ENCODE measurements at regions of chr1 and their contacts with region 1.

Region 1: GRCh38 chr1:235888119-235888643 is 21.5 kb upstream of the LYST start:
- DNase-seq: peak; percentile 78
- H3K4me3 Mint-ChIP-seq: peak overlapping the region; percentile 20
- H3K27ac Mint-ChIP-seq: peak overlapping the region; percentile 80
- H3K4me1 Mint-ChIP-seq: peaks cover 46% of the 10 kb centered on the region
- H3K27me3 Mint-ChIP-seq: no peaks in the 10 kb centered on the region

Region 2: DNA sequence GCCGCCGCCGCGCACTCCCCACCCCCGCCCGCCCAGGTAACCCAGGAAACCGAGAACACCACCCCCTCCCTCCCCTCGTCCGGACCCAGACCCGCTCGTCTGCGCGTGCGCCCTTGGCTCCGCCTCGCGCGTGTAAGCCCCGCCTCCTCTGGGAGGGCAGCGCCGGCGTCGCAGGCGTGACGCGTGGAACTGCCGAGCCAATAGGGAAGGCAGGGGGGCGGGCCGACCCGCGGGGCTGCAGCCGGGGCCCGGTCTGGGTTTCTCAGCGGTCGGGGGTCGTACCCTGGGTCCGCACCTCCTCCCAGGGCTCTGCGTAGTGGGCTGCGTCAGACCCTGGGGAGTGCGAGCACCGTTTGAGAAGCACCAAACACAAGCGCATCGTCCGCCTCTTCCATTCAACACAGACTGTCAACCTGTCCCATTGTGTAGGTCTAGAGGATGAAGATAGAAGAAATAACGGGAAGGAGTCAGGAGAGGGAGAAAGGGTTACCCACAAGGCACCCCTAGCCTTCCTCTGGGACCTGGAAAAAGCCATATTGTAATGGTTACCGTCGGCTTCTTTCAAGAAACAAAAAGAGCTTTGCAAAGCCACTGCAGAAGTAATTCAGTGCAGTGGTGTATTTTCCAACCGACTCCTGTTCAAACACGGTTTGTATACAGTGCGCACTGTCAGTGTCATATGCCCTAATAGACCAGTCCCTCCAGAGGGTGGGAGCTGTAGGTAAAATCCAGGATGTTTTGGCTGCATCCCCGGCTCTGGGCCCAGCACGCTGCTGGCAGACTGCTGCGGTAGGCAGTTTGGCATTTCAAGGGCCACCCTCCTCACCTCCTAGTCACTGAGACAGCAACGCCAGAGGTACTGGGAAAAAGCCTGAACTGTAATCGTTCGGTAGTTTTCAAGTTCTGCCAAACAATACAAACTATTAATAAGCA is 21.0 kb before region 1 on chr1:
- CTCF ChIA-PET with region 1: interaction called, 16 read pairs
- POLR2A ChIA-PET with region 1: interaction called, 14 read pairs
- intact Hi-C with region 1: loop called (anchors 1 kb)
- DNase-seq: peak; percentile 98
- H3K4me3 Mint-ChIP-seq: peak overlapping the region; percentile 89
- H3K27ac Mint-ChIP-seq: peak overlapping the region; percentile 98
- H3K4me1 Mint-ChIP-seq: peaks cover 45% of the 10 kb centered on the region
- H3K27me3 Mint-ChIP-seq: no peaks in the 10 kb centered on the region

Region 3: GRCh38 chr1:235876402-235877097 is 11.6 kb before region 1 on chr1:
- CTCF ChIA-PET with region 1: interaction called, 9 read pairs
- POLR2A ChIA-PET with region 1: interaction called, 7 read pairs
- intact Hi-C with region 1: loop called (anchors 1 kb)
- DNase-seq: peak; percentile 27
- H3K4me3 Mint-ChIP-seq: peak overlapping the region; percentile 4
- H3K27ac Mint-ChIP-seq: peak overlapping the region; percentile 56
- H3K4me1 Mint-ChIP-seq: peaks cover 64% of the 10 kb centered on the region
- H3K27me3 Mint-ChIP-seq: no peaks in the 10 kb centered on the region

Region 4: DNA sequence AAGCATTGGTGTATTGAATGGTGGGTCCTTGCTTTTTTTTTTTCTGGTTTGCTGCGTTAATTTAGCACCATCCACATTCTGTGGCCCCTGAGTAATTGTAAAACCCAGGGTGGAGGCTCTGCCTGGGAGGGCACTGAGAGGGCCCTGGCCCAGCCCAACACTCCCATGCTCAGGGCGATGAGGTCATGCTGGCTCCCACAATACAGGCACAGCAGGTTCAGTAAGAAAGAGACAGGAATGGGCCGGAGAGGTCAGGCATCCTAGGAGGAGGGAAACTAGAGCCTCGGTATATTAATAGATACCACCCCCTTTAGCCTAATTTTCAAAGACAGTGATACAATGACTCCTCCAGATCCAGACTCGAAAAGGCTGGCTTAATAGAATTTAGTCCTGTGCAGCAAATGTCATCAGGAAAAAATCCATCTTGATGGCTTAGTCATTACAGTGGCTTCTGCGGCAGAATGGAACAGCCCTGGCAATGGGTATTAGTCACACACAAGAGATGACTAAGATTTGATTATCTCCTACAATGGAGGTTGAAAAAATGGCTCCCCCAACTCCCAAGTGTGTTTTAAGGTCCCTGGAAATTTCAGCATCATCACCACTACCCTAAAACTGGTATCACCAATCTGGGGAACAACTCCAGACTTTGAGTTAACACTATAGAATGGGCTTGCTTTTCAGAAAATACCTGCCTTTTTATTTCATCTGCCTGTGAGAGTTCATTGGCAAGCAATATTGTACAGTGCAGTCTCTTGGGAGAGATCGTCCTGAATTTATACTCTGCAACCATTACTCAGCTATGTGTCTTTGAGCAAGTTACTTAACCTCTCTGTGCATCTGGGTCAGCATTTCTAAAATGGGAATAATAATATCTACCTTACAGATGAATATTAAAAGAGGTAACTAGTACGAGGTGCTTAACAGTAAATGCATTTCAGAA is 22.4 kb after region 1 on chr1:
- CTCF ChIA-PET with region 1: interaction called, 3 read pairs
- POLR2A ChIA-PET with region 1: no interaction called
- intact Hi-C with region 1: loop called (anchors 1 kb)
- DNase-seq: peak; percentile 73
- H3K4me3 Mint-ChIP-seq: no peak overlapping the region
- H3K27ac Mint-ChIP-seq: peak overlapping the region; percentile 44
- H3K4me1 Mint-ChIP-seq: peaks cover 23% of the 10 kb centered on the region
- H3K27me3 Mint-ChIP-seq: no peaks in the 10 kb centered on the region

Region 5: DNA sequence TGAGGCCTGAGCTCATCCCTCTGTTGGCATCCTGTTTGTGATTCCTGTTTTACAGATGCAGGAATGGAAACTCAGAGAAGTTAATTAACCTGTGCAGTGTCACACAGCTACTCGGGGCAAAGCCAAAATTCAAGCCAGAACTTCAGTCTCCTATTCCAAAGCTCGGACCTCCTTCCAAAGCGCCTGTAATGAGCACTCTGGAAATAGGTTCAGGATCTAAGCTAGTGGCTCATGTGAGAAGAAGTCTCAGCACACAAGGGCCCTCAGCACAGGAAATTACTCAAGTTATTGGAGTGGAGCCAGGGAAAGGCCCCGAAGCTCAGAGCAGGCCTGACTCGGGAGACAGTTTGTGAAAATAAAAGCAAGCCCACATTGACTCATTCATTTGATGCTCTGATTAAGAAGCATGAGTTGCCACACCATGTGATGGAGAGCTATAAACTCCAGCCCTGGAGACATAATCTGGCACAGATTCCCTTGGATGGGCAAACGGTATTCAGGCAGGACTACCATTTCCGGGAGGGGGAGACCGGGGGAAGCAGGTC is 29.2 kb after region 1 on chr1:
- CTCF ChIA-PET with region 1: interaction called, 5 read pairs
- POLR2A ChIA-PET with region 1: interaction called, 3 read pairs
- intact Hi-C with region 1: loop called (anchors 1 kb)
- DNase-seq: peak; percentile 86
- H3K4me3 Mint-ChIP-seq: no peak overlapping the region
- H3K27ac Mint-ChIP-seq: peak overlapping the region; percentile 66
- H3K4me1 Mint-ChIP-seq: peaks cover 34% of the 10 kb centered on the region
- H3K27me3 Mint-ChIP-seq: no peaks in the 10 kb centered on the region

Region 6: DNA sequence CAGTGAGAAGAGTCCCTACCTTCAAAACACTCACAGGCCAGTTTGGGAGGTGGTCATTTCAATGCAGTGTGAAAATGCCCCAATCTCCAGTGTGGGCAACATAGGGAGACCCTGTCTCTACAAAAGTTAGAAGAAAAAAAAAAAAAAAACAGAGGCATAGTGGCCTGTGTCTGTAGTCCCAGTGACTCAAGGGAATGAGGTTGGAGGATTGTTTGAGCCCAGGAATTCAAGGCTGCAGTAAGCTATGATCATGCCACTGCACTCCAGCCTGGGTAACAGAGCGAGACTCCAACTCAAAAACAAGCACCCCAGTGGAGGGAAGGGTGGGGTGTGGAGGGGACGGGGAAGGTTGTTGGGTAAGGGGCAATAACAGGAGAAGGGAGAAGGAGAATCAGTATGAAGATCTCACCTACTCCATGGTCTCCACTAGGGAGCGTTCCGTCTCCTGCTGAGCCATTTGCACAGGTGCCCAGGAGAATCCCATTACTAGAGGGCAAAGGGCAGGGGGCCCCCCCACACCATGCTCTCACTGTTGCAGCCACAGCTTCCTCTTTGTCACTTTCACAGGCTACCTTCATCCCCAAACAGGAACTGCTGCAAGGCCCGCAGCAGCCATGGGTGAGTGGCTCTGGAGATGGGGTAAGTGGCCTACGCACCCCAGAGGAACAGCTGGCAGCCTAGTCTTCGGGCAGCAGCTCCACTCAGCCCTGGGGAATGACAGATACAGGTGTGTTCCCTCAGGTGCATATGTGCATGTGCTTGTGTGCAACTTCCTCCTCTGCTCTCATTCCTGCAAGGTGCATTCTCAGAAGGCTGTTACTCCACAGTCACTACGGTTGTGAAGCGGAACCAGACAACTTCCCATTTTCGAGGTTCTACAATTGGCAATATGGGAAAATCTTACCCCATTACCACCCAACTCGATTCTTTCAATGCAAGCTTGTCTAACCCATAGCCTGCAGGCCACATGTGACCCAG is 66.4 kb after region 1 on chr1:
- CTCF ChIA-PET with region 1: no interaction called
- POLR2A ChIA-PET with region 1: interaction called, 6 read pairs
- intact Hi-C with region 1: loop called (anchors 1 kb)
- DNase-seq: peak; percentile 67
- H3K4me3 Mint-ChIP-seq: no peak overlapping the region
- H3K27ac Mint-ChIP-seq: no peak overlapping the region
- H3K4me1 Mint-ChIP-seq: peaks cover 33% of the 10 kb centered on the region
- H3K27me3 Mint-ChIP-seq: no peaks in the 10 kb centered on the region